A673 (cell line): ENCODE measurements at regions of chr6 and their contacts with region 1.

Region 1: GRCh38 chr6:158584236-158584651 is 24.4 kb downstream of the TMEM181 start:
- DNase-seq: peak; percentile 13
- H3K4me3 ChIP-seq: no peak overlapping the region
- H3K27ac ChIP-seq: no peak overlapping the region
- H3K4me1 ChIP-seq: no peaks in the 10 kb centered on the region
- H3K27me3 ChIP-seq: no peaks in the 10 kb centered on the region
- CTCF ChIP-seq: no peak

Region 2: DNA sequence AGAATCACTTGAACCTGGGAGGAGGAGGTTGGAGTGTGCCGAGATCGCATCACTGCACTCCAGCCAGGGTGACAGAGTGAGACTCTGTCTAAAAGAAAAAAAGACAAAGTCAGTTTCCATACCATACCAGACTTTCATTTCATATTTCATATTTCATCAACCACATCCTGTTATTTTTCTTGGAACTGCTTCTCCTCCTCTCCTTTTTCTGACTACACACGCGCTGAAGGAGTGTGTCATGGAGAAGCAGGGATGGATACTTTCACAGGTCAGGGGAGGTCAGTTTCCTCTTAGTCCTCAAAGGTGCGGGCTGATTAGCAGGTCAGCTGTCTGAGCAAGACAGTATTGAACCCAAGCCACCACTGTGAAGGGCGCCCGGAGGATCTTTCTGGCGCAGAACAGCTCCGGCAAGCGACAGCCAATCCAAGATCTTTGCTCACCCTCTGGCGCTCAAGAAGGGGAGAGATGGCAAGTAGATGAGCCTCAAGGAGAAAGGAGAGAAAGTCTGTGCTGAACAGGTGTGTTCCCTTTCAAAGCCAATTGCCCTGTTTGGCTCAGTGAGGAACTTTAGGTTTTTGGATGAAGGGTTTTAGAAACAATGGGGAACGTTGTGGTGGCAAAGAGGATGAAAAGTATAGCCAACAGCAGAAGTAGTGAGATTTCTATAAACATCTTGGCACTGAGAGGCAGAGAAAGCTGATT is 621.5 kb before region 1 on chr6:
- CTCF ChIA-PET with region 1: no interaction called
- POLR2A ChIA-PET with region 1: no interaction called
- intact Hi-C with region 1: no loop called
- DNase-seq: no peak
- H3K4me3 ChIP-seq: no peak overlapping the region
- H3K27ac ChIP-seq: no peak overlapping the region
- H3K4me1 ChIP-seq: no peaks in the 10 kb centered on the region
- H3K27me3 ChIP-seq: no peaks in the 10 kb centered on the region
- CTCF ChIP-seq: no peak

Region 3: GRCh38 chr6:158660333-158660754 is 76.1 kb after region 1 on chr6:
- CTCF ChIA-PET with region 1: interaction called, 11 read pairs
- POLR2A ChIA-PET with region 1: interaction called, 4 read pairs
- intact Hi-C with region 1: no loop called
- DNase-seq: no peak
- H3K4me3 ChIP-seq: no peak overlapping the region
- H3K27ac ChIP-seq: no peak overlapping the region
- H3K4me1 ChIP-seq: peaks cover 22% of the 10 kb centered on the region
- H3K27me3 ChIP-seq: no peaks in the 10 kb centered on the region
- CTCF ChIP-seq: peak; percentile 69